ENCODE measurements at regions of chr11 and their contacts with region 1.

Region 1: GRCh38 chr11:12973528-12974181 is 35.5 kb upstream of the RASSF10 start:
- DNase-seq: no peak
- ATAC-seq: no peak
- H3K4me3 ChIP-seq: no peak overlapping the region
- H3K27ac ChIP-seq: no peak overlapping the region
- H3K4me1 ChIP-seq: no peaks in the 10 kb centered on the region
- H3K27me3 ChIP-seq: no peaks in the 10 kb centered on the region
- CTCF ChIP-seq: no peak

Region 2: DNA sequence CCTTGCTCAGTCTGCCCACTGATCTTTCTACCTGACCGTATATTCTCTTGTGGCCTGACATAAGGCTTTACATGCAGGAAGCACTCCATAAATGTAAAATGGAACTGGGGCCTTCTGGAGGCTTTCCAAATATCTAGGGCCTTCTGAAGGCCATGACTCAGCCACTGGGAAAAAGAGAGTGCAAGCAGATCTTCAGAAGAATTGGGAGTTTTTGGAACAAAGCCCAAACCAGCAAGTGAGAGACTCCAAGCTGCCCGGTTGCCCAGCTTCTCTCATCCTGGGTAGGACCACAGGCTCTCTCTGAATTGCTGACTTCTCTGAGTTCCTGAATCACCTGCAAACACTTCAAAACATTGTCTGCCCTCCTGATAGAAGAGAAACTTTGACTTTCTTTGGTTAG is 196.1 kb after region 1 on chr11:
- intact Hi-C with region 1: loop called in 1 of 10 experiments (anchors 5 kb)
- DNase-seq: no peak
- ATAC-seq: peak in 1 of 8 donors; percentile 33
- H3K4me3 ChIP-seq: no peak overlapping the region
- H3K27ac ChIP-seq: no peak overlapping the region
- H3K4me1 ChIP-seq: peaks cover 0 to 5% (median 0%) of the 10 kb centered on the region in 9 donors
- H3K27me3 ChIP-seq: peaks cover 0 to 13% (median 0%) of the 10 kb centered on the region in 7 donors
- CTCF ChIP-seq: no peak